AG04450 (cell line): ENCODE measurements at regions of chr13 and their contacts with region 1.

Region 1: GRCh38 chr13:31909864-31910551 is 121.6 kb upstream of the FRY start:
- DNase-seq: peak; percentile 42
- H3K4me3 ChIP-seq: no peak overlapping the region
- H3K27ac ChIP-seq: no peak overlapping the region
- H3K27me3 ChIP-seq: peaks cover 8% of the 10 kb centered on the region
- CTCF ChIP-seq: peak; percentile 85

Region 2: DNA sequence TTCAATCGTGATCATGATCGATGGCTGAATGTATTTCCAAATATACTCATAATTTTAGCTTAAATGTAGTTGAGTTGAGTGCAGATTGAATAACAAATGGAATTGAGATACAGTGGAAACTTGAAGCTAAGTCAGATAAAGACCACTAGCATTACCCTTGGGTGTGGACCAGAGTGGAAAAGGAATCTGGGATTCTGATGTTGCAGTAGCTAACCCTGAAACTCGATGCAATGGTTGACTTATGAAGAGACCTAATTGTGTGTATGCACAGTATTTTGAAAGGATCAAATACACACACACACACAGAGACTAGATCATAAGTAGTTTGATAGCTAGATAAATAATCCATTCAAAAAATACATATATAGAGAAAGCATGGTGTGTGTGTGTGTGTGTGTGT is 34.9 kb before region 1 on chr13:
- CTCF ChIA-PET with region 1: no interaction called
- POLR2A ChIA-PET with region 1: no interaction called
- DNase-seq: no peak
- H3K4me3 ChIP-seq: no peak overlapping the region
- H3K27ac ChIP-seq: no peak overlapping the region
- H3K27me3 ChIP-seq: peaks cover 4% of the 10 kb centered on the region
- CTCF ChIP-seq: no peak

Region 3: DNA sequence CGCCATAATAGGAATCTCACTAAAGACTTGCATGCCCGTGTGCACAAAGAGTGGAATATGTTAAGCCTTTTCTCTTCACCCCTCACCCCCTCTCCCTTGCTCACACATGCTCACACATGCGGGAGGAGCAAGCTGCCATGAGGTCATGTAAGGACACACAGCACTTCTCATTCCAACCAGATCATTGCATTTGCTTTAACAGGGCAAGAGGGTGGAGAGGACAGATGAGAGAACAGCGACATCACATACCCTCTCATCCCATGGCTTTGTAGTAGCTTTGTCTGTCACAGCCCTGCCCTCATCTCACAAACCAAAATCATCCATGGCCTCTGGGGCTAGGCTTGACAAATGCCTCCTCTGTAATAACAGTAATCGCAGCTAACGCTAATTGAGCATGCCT is 24.0 kb before region 1 on chr13:
- CTCF ChIA-PET with region 1: interaction called, 18 read pairs
- POLR2A ChIA-PET with region 1: no interaction called
- DNase-seq: no peak
- H3K4me3 ChIP-seq: no peak overlapping the region
- H3K27ac ChIP-seq: no peak overlapping the region
- H3K27me3 ChIP-seq: peaks cover 7% of the 10 kb centered on the region
- CTCF ChIP-seq: no peak

Region 4: GRCh38 chr13:31937436-31937835 is 27.4 kb after region 1 on chr13:
- CTCF ChIA-PET with region 1: interaction called, 13 read pairs
- POLR2A ChIA-PET with region 1: no interaction called
- DNase-seq: no peak
- H3K4me3 ChIP-seq: no peak overlapping the region
- H3K27ac ChIP-seq: no peak overlapping the region
- H3K27me3 ChIP-seq: no peaks in the 10 kb centered on the region
- CTCF ChIP-seq: no peak

Region 5: DNA sequence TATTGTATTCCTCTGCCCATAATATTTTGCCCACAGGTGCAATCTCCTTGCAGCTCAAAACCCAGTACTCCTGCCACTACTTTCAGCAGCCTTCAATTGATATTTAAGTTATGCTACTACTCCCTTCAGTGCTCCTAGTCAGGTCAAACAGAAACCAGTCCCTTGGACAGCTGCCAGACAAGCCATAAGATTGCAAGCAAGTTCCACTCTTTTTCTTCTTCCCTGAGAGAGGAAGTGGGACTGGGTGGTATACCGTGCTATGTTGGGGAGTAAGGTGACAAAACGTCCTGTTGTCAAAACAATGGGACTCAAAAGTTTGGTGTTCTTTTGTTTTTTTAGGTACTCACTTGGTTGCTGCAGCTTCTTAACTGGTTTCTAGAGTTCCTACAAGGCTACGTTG is 58.5 kb after region 1 on chr13:
- CTCF ChIA-PET with region 1: interaction called, 17 read pairs
- POLR2A ChIA-PET with region 1: no interaction called
- DNase-seq: no peak
- H3K4me3 ChIP-seq: no peak overlapping the region
- H3K27ac ChIP-seq: no peak overlapping the region
- H3K27me3 ChIP-seq: no peaks in the 10 kb centered on the region
- CTCF ChIP-seq: no peak

Region 6: GRCh38 chr13:32039528-32039927 is 129.5 kb after region 1 on chr13:
- CTCF ChIA-PET with region 1: interaction called, 17 read pairs
- POLR2A ChIA-PET with region 1: interaction called, 4 read pairs
- DNase-seq: no peak
- H3K4me3 ChIP-seq: no peak overlapping the region
- H3K27ac ChIP-seq: no peak overlapping the region
- H3K27me3 ChIP-seq: no peaks in the 10 kb centered on the region
- CTCF ChIP-seq: no peak

Region 7: GRCh38 chr13:32246468-32246867 is 336.5 kb after region 1 on chr13:
- CTCF ChIA-PET with region 1: interaction called, 29 read pairs
- POLR2A ChIA-PET with region 1: no interaction called
- DNase-seq: no peak
- H3K4me3 ChIP-seq: no peak overlapping the region
- H3K27ac ChIP-seq: no peak overlapping the region
- H3K27me3 ChIP-seq: no peaks in the 10 kb centered on the region
- CTCF ChIP-seq: peak; percentile 83